ENCODE measurements at regions of chr7 and their contacts with region 1.

Region 1: GRCh38 chr7:136339464-136339863 is 362.3 kb upstream of the MTPN start:
- DNase-seq: no peak
- H3K4me3 Mint-ChIP-seq: no peak overlapping the region
- H3K27ac Mint-ChIP-seq: no peak overlapping the region
- H3K4me1 Mint-ChIP-seq: no peaks in the 10 kb centered on the region
- H3K27me3 Mint-ChIP-seq: no peaks in the 10 kb centered on the region
- CTCF ChIP-seq: no peak

Region 2: DNA sequence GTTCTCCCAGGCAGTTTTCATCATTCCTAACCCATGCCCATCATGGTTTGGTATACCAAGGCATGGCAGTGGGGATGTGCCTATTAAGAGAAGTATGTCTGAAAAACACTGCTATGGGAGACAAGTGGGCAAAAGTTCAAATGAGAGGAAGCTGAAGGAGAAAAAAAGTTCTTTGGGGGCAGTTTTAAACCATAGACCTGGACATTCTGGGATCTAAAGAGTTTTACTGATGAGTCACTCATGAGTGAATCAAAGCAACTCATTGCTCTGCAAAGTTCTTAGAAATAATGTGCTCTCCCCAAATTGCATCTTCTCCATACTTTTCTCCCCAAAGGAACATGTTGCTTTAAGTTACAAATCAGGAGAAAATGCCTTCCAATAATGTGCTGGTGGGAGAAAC is 105.4 kb before region 1 on chr7:
- CTCF ChIA-PET with region 1: no interaction called
- intact Hi-C with region 1: no loop called
- DNase-seq: no peak
- H3K4me3 Mint-ChIP-seq: no peak overlapping the region
- H3K27ac Mint-ChIP-seq: no peak overlapping the region
- H3K4me1 Mint-ChIP-seq: no peaks in the 10 kb centered on the region
- H3K27me3 Mint-ChIP-seq: no peaks in the 10 kb centered on the region
- CTCF ChIP-seq: no peak

Region 3: DNA sequence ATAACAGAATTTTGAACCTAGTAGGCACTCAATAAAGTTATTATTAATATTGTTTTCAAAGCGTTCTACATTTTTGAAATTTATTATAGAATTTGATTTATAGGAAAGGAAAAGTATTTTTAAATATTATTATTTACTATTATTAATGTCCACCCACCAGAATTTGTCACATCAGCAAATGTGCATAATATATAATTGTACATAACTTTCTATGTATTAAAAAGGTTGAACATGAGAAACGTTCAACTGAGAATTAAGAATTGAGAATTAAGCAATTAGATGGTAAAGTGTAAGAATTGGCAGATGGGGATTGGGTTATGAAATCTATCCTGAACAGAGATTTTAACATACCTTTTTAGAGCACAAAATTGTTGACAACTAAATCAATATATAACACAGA is 874.3 kb after region 1 on chr7:
- CTCF ChIA-PET with region 1: no interaction called
- intact Hi-C with region 1: loop called (anchors 10 kb)
- DNase-seq: no peak
- H3K4me3 Mint-ChIP-seq: no peak overlapping the region
- H3K27ac Mint-ChIP-seq: no peak overlapping the region
- H3K4me1 Mint-ChIP-seq: no peaks in the 10 kb centered on the region
- H3K27me3 Mint-ChIP-seq: no peaks in the 10 kb centered on the region
- CTCF ChIP-seq: no peak

Measured in Calu3 (cell line).